Heart right ventricle (tissue), 16 donors: ENCODE measurements at regions of chr11 and their contacts with region 1.

Region 1: GRCh38 chr11:14358729-14359439 is at the start of gene RRAS2:
- DNase-seq: peak; percentile 71 to 77
- ATAC-seq: peak; percentile 88 to 92 (median 90)
- H3K4me3 ChIP-seq: peak within 1 kb of the TSS; percentile 53 to 94 (median 84)
- H3K27ac ChIP-seq: peak within 1 kb of the TSS; percentile 46 to 91 (median 84)
- H3K4me1 ChIP-seq: peaks cover 0 to 33% (median 13%) of the 10 kb centered on the region in 9 donors
- H3K27me3 ChIP-seq: peaks cover 0 to 28% (median 0%) of the 10 kb centered on the region in 7 donors
- CTCF ChIP-seq: peak in 1 of 9 donors; percentile 17
- total RNA-seq, gene RRAS2: 21.8 to 142 (median 52.9) TPM

Region 2: GRCh38 chr11:14300661-14301304 is 58.1 kb before region 1 on chr11:
- intact Hi-C with region 1: loop called in 1 of 10 experiments (anchors 10 kb)
- DNase-seq: peak in 1 of 2 donors; percentile 52
- ATAC-seq: peak; percentile 80 to 93 (median 87)
- H3K4me3 ChIP-seq: no peak overlapping the region
- H3K27ac ChIP-seq: no peak overlapping the region
- H3K4me1 ChIP-seq: peaks cover 0 to 42% (median 18%) of the 10 kb centered on the region in 9 donors
- H3K27me3 ChIP-seq: no peaks in the 10 kb centered on the region
- CTCF ChIP-seq: peak; percentile 65 to 85 (median 77)

Region 3: GRCh38 chr11:14578541-14578956 is 219.7 kb after region 1 on chr11:
- intact Hi-C with region 1: no loop called
- DNase-seq: peak in 1 of 2 donors; percentile 26
- ATAC-seq: peak in 7 of 8 donors; percentile 44 to 75 (median 67)
- H3K4me3 ChIP-seq: no peak overlapping the region
- H3K27ac ChIP-seq: peak overlapping the region in 4 of 10 donors; percentile 17 to 79 (median 36)
- H3K4me1 ChIP-seq: peaks cover 0 to 33% (median 10%) of the 10 kb centered on the region in 9 donors
- H3K27me3 ChIP-seq: no peaks in the 10 kb centered on the region
- CTCF ChIP-seq: no peak